K562 (cell line): ENCODE measurements at regions of chrX and their contacts with region 1.

Region 1: GRCh38 chrX:119004920-119005524 is 30.6 kb downstream of the LONRF3 start:
- DNase-seq: peak; percentile 45 to 52 (median 47)
- ATAC-seq: peak; percentile 97
- H3K4me3 ChIP-seq: no peak overlapping the region
- H3K27ac ChIP-seq: no peak overlapping the region
- H3K4me1 ChIP-seq: no peaks in the 10 kb centered on the region; a peak in 1 of 5 replicates
- H3K27me3 ChIP-seq: no peaks in the 10 kb centered on the region
- CTCF ChIP-seq: peak; percentile 67 to 87 (median 69)
- EP300 ChIP-seq: no peak
- POLR2A ChIP-seq: no peak
- RAD21 ChIP-seq: peak; percentile 39 to 59; a peak in 3 of 4 replicates

Region 2: GRCh38 chrX:119067023-119067739 is 62.2 kb after region 1 on chrX:
- CTCF ChIA-PET with region 1: interaction called, 11 read pairs
- POLR2A ChIA-PET with region 1: no interaction called
- in situ Hi-C with region 1: no loop called
- intact Hi-C with region 1: loop called (anchors 5 kb)
- DNase-seq: peak; percentile 53 to 63 (median 62)
- ATAC-seq: peak; percentile 83
- H3K4me3 ChIP-seq: no peak overlapping the region
- H3K27ac ChIP-seq: no peak overlapping the region
- H3K4me1 ChIP-seq: peaks cover 0 to 9% of the 10 kb centered on the region in 2 experiments; a peak in 3 of 5 replicates
- H3K27me3 ChIP-seq: peaks cover 0 to 4% of the 10 kb centered on the region in 2 experiments; a peak in 1 of 5 replicates
- CTCF ChIP-seq: peak; percentile 70 to 81 (median 78)
- EP300 ChIP-seq: no peak
- POLR2A ChIP-seq: no peak
- RAD21 ChIP-seq: peak; percentile 72 to 73